Natural killer cell (primary cell): ENCODE measurements at regions of chr2 and their contacts with region 1.

Region 1: DNA sequence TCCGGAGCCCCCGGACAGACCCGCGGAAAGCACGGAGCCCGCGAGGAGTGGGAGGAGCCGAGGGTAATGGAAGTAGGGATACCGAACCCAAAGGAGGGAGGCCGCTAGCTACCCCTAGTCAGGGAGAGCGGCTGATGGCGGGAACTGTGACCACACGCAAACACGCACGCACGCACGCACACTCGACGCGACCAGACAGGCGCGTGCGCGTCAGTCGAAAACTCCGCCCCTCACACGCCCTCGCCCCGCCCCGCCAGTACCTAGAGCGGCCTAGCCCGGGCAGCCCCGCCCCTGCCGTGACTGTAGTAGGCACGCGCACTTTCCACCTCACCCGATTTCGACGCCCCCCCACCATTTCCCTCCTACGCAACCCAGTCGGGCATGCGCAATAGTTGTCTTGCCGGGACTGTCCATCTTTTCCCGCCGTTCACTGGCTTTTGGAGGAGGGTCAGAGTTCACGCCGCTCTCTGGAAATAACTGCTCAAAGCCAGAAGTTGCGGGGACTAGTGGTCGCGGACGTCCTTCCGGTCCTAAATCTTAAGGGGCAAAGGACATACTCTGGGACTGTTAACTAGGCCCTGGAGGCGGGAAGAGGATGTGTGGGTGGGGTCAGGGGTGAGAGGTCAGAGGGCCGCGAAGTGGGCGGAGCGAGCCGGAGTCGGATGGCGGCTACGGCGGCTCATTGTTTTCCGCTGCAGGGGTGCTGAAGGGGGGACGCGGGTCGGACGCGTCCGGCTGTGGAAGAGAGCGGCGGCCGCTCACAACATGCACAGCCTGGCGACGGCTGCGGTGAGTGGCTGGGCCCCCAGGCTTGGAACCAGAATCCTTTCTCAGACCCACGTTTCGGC is at the starts of genes CNOT9 and USP37:
- DNase-seq: peak; percentile 99 to 100
- ATAC-seq: peak; percentile 86 to 97 (median 89)
- H3K4me3 ChIP-seq: peak within 1 kb of the TSS; percentile 67
- H3K4me3 Mint-ChIP-seq: peak within 1 kb of the TSS; percentile 99
- H3K27ac ChIP-seq: peak within 1 kb of the TSS; percentile 98
- H3K27ac Mint-ChIP-seq: peak within 1 kb of the TSS; percentile 92 to 95
- H3K4me1 ChIP-seq: peaks cover 27% of the 10 kb centered on the region
- H3K4me1 Mint-ChIP-seq: peaks cover 42 to 67% of the 10 kb centered on the region in 2 donors
- H3K27me3 ChIP-seq: no peaks in the 10 kb centered on the region
- H3K27me3 Mint-ChIP-seq: no peaks in the 10 kb centered on the region
- CTCF ChIP-seq: no peak
- total RNA-seq, gene CNOT9: 61.4 to 66.7 (median 66.3) TPM
- total RNA-seq, gene USP37: 18.3 to 26.2 (median 21.6) TPM

Region 2: GRCh38 chr2:218286570-218287459 is 281.6 kb before region 1 on chr2:
- intact Hi-C with region 1: loop called (anchors 2 kb)
- DNase-seq: peak; percentile 77 to 96
- ATAC-seq: peak; percentile 66 to 87 (median 75)
- H3K4me3 ChIP-seq: peak overlapping the region; percentile 40
- H3K4me3 Mint-ChIP-seq: peak overlapping the region; percentile 92
- H3K27ac ChIP-seq: peak overlapping the region; percentile 99
- H3K27ac Mint-ChIP-seq: peak overlapping the region; percentile 100
- H3K4me1 ChIP-seq: peaks cover 92% of the 10 kb centered on the region
- H3K4me1 Mint-ChIP-seq: peaks cover 70 to 94% of the 10 kb centered on the region in 2 donors
- H3K27me3 ChIP-seq: no peaks in the 10 kb centered on the region
- H3K27me3 Mint-ChIP-seq: no peaks in the 10 kb centered on the region
- CTCF ChIP-seq: no peak

Region 3: GRCh38 chr2:219388127-219388844 is 819.9 kb after region 1 on chr2:
- intact Hi-C with region 1: loop called (anchors 5 kb)
- DNase-seq: peak; percentile 98 to 99
- ATAC-seq: peak; percentile 79 to 90 (median 80)
- H3K4me3 ChIP-seq: peak overlapping the region; percentile 12
- H3K4me3 Mint-ChIP-seq: peak overlapping the region; percentile 63
- H3K27ac ChIP-seq: peak overlapping the region; percentile 71
- H3K27ac Mint-ChIP-seq: peak overlapping the region; percentile 92 to 98
- H3K4me1 ChIP-seq: peaks cover 18% of the 10 kb centered on the region
- H3K4me1 Mint-ChIP-seq: peaks cover 4 to 21% of the 10 kb centered on the region in 2 donors
- H3K27me3 ChIP-seq: no peaks in the 10 kb centered on the region
- H3K27me3 Mint-ChIP-seq: peaks cover 0 to 4% of the 10 kb centered on the region in 2 donors
- CTCF ChIP-seq: peak; percentile 61